ENCODE measurements at regions of chr16 and their contacts with region 1.

Region 1: DNA sequence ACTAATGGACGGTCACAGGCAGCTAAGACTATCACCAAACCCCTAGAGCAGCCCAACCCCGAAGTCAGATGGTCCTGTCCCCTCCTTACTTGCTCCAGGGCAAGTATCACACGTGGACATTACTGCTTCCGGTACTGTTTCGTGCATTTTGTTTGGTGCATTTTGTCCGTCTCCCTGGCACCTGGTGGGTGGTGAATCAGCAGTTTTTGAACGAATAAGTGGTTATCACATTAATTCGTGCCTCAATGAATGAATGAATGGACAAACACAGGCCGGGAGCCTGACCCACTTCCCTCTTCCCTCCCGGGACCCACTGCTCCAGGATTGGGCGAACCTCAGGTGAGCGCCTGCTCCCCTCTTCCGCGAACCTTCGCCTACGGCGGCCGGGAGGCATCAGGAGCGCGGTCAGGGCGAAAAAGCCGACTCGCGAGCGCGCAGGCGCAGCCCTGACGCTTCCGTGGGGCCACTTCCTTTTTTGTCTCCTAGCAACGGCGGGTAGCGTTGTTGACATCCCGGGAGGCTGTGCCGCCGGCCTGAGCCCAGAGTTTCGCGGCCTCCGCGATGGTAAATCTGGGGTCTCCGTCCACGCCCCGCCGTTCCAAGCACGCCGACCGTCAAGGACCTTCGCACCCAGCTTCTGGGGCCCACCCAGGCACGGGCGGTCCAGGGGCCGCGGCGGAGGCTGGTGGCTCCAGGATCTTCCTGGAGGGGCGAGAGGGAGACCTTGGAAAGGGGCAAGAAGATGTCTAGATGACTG is at the start of gene DYNLRB2:
- DNase-seq: peak; percentile 89 to 96 (median 95)
- H3K4me3 ChIP-seq: peak within 1 kb of the TSS; percentile 57 to 97
- H3K4me3 Mint-ChIP-seq: peak within 1 kb of the TSS; percentile 91 to 98 (median 96)
- H3K27ac ChIP-seq: peak within 1 kb of the TSS; percentile 67
- H3K27ac Mint-ChIP-seq: peak within 1 kb of the TSS; percentile 95 to 99 (median 98)
- H3K4me1 ChIP-seq: peaks cover 12% of the 10 kb centered on the region
- H3K4me1 Mint-ChIP-seq: peaks cover 8 to 21% (median 14%) of the 10 kb centered on the region in 4 donors
- H3K27me3 ChIP-seq: no peaks in the 10 kb centered on the region
- H3K27me3 Mint-ChIP-seq: peaks cover 1 to 7% of the 10 kb centered on the region in 2 donors
- total RNA-seq, gene DYNLRB2: 0.78 TPM in 1 of 2 experiments, not detected in the other

Region 2: DNA sequence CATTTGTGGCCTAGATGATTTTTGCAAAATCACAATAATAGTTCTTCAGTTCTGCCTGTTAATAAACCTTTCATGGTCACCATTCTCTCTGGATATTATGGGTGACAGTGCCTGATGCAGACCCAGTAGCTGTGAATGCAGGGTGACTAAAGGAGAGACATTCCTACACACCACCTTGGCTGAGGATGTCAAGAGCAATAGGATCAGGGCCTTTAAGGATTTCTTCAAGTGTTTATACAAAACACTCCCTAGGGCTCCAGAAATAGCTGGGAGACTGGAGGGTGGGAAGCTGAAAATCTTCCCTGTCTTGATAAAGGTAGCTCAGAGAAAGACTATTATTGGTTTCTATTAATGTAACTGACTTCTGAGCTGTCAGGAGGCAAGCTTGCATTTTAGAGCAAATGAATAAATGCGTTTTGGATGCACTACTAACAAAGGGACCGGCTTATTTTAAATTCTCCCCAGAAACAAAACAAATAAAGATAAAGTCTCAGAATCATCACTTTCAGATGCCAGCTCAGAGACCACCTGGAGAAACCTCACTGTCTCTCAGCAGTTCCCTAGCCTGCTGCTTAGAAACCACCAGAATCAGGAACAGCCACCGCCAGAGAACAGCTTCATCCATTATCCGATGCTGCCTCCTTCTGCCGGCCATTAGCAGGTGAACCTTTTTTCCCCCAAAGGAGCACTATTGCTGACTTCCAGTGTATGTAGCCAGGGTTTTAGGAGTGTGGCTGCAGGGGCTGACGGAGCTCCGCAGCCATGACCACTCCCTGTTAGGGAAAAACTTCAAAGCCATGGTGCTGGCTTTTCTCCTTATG is 171.3 kb before region 1 on chr16:
- CTCF ChIA-PET with region 1: no interaction called
- POLR2A ChIA-PET with region 1: no interaction called
- intact Hi-C with region 1: no loop called
- DNase-seq: no peak
- H3K4me3 ChIP-seq: no peak overlapping the region
- H3K4me3 Mint-ChIP-seq: no peak overlapping the region
- H3K27ac ChIP-seq: no peak overlapping the region
- H3K27ac Mint-ChIP-seq: no peak overlapping the region
- H3K4me1 ChIP-seq: no peaks in the 10 kb centered on the region
- H3K4me1 Mint-ChIP-seq: no peaks in the 10 kb centered on the region
- H3K27me3 ChIP-seq: no peaks in the 10 kb centered on the region
- H3K27me3 Mint-ChIP-seq: peaks cover 0 to 3% of the 10 kb centered on the region in 2 donors

Region 3: DNA sequence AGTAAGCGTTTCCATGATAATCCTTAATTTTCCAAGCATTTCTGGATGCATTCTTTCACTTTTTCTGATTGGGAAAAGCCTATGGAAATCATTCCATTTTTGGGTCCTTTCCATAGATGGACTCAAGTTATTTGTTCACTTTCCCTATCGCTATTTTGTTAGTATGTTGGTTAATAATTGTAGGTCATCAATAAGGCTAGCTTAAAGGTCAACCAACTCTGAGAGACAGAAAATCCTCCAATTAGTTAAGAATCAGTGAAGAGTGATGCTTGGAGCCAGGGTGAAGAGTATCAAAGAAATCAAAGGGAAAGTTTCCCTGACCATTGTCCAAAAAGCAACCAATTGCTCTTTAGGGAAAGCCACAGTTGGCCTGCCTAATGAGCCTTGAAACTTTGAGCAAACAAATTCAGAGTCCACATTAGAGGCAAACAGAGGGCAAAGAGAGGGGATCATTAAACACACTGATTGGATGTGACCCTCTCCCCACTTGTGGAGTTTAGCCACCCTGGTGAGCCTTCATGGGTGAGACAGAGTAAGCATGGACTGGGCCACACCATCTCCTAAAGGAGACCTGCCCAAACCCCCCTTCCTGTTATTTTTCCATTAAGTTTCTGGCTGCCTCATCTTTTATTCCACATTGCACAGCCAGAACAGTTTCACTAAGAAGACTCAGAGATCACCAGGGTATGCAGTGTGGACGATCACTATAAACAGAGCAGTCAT is 133.3 kb before region 1 on chr16:
- CTCF ChIA-PET with region 1: no interaction called
- POLR2A ChIA-PET with region 1: no interaction called
- intact Hi-C with region 1: no loop called
- DNase-seq: no peak
- H3K4me3 ChIP-seq: no peak overlapping the region
- H3K4me3 Mint-ChIP-seq: no peak overlapping the region
- H3K27ac ChIP-seq: no peak overlapping the region
- H3K27ac Mint-ChIP-seq: no peak overlapping the region
- H3K4me1 ChIP-seq: no peaks in the 10 kb centered on the region
- H3K4me1 Mint-ChIP-seq: no peaks in the 10 kb centered on the region
- H3K27me3 ChIP-seq: no peaks in the 10 kb centered on the region
- H3K27me3 Mint-ChIP-seq: peaks cover 13 to 26% of the 10 kb centered on the region in 2 donors

Region 4: DNA sequence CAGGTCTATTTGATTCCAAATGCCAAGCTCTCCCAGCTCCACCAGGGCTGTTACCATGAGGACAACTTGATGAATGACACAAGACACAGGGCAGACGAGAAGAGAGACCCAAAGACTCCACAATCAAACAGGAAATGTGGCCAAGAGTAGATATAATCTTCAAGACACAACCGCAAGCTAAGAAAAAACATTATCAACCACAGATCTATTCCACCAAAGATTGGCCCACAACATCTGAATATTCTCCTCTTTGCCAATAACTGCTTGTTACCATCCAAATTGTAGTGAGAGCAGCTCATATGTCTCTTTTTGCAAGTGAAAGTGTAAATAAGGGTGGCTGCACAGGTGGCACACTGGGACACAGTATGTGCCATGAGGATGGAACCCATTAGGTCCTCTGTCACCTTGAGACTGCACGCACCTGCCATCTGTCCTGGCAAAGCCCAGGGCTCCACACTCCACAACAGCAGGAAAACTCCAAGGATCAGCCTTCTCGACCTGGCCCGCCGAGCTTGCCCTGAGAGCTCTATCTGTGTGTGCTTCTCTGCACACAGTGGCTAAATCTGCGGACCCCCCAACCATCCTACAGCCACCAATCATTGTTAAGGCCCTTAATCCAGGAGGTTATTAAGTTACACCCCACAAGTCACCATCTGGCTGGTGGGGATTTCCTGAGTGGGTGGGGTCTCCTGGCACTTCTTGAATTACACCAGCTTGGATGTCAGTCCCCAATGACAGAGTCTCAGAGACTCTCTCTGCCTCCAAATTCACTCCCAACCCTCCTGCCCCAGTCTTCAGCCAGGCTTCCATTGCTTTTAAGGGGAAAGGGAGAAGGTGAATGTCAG is 50.6 kb after region 1 on chr16:
- CTCF ChIA-PET with region 1: no interaction called
- POLR2A ChIA-PET with region 1: no interaction called
- intact Hi-C with region 1: loop called (anchors 1 kb)
- DNase-seq: peak; percentile 66 to 82 (median 78)
- H3K4me3 ChIP-seq: peak overlapping the region in 1 of 2 donors; percentile 7
- H3K4me3 Mint-ChIP-seq: peak overlapping the region; percentile 3 to 82 (median 54)
- H3K27ac ChIP-seq: no peak overlapping the region
- H3K27ac Mint-ChIP-seq: peak overlapping the region in 6 of 7 donors; percentile 3 to 74 (median 66)
- H3K4me1 ChIP-seq: peaks cover 22% of the 10 kb centered on the region
- H3K4me1 Mint-ChIP-seq: peaks cover 20 to 37% (median 28%) of the 10 kb centered on the region in 4 donors
- H3K27me3 ChIP-seq: no peaks in the 10 kb centered on the region
- H3K27me3 Mint-ChIP-seq: peaks cover 9 to 17% of the 10 kb centered on the region in 2 donors

Region 5: GRCh38 chr16:80656711-80657150 is 116.0 kb after region 1 on chr16:
- CTCF ChIA-PET with region 1: no interaction called
- POLR2A ChIA-PET with region 1: no interaction called
- intact Hi-C with region 1: loop called (anchors 5 kb)
- DNase-seq: peak; percentile 46 to 62 (median 51)
- H3K4me3 ChIP-seq: peak overlapping the region; percentile 33 to 72
- H3K4me3 Mint-ChIP-seq: peak overlapping the region; percentile 82 to 97 (median 90)
- H3K27ac ChIP-seq: peak overlapping the region; percentile 52
- H3K27ac Mint-ChIP-seq: peak overlapping the region; percentile 69 to 97 (median 92)
- H3K4me1 ChIP-seq: peaks cover 20% of the 10 kb centered on the region
- H3K4me1 Mint-ChIP-seq: peaks cover 19 to 33% (median 26%) of the 10 kb centered on the region in 4 donors
- H3K27me3 ChIP-seq: no peaks in the 10 kb centered on the region
- H3K27me3 Mint-ChIP-seq: no peaks in the 10 kb centered on the region

Region 6: DNA sequence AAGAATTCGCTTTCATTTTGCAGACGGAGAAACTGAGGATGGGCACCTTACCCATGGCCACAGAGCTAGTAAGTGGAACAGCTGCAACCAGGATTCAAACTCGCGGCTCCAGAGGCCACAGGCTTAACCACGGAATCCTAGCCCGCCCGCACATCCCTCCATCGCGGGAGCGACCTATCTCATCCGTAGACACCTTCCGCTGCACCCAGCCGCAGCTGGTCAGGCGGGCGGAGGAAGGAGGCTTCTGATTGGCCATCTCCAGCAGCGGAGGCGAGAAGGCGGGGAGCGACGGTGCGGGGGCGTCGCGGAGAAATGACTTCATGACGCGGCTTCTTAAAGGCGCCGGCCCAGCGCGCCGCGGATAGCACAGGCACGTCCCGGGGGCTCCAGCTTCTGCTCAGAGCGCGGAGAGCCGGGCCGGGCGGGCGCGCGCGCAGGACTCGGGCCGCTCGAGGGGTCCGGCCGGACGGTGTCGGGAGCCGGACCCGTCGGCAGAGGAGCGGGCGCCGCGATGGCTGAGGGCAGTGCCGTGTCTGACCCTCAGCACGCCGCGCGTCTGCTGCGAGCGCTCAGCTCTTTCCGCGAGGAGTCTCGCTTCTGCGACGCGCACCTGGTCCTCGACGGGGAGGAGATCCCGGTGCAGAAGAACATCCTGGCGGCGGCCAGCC is 774.0 kb after region 1 on chr16 and contains the start of gene GAN:
- CTCF ChIA-PET with region 1: no interaction called
- POLR2A ChIA-PET with region 1: no interaction called
- intact Hi-C with region 1: loop called (anchors 10 kb)
- DNase-seq: peak; percentile 93 to 95 (median 94)
- H3K4me3 ChIP-seq: peak within 1 kb of the TSS; percentile 86 to 93
- H3K4me3 Mint-ChIP-seq: peak within 1 kb of the TSS; percentile 92 to 99 (median 97)
- H3K27ac ChIP-seq: peak within 1 kb of the TSS; percentile 33
- H3K27ac Mint-ChIP-seq: peak within 1 kb of the TSS; percentile 89 to 98 (median 94)
- H3K4me1 ChIP-seq: peaks cover 25% of the 10 kb centered on the region
- H3K4me1 Mint-ChIP-seq: peaks cover 33 to 53% (median 44%) of the 10 kb centered on the region in 4 donors
- H3K27me3 ChIP-seq: no peaks in the 10 kb centered on the region
- H3K27me3 Mint-ChIP-seq: no peaks in the 10 kb centered on the region
- total RNA-seq, gene GAN: 9.5 to 10.8 TPM

Measured in CD4-positive, alpha-beta memory T cell (primary cell).